Activated CD4-positive, alpha-beta T cell treated with anti-CD3 and anti-CD28 coated beads, Interleukin-2, amount 10 ng/mL, durations not matched to agents 7 days and 5 days (primary cell): ENCODE measurements at regions of chr17 and their contacts with region 1.

Region 1: DNA sequence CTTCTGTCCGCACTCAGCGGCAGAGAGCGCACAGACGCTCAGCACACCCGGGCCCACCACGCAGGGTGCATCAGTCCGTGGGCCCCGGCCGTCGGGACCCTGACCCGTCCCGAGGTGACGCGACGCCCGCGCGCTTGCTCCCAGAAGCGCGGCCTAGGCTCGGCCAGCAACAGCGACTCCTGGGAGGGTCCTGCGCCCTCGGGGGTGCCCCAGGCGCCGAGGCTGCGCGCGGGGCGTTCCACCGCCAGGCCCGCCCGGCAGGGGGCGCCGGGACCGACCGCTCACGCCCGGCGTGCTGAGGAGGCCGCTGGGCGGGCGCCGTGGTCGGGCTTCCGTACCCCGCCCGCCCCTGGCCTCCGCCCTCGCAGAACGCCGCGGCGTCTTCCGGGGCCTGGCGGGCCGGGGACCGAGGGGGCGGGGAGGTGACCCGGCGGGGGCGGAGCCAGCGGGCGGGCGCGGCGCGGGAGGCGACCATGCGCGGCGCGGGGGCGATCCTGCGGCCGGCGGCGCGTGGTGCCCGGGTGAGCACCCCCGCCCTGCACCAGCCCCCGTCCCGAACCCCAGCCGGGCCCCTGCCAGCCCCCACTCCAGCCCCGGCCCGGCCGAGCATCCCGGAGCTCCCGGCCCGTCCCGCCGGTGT is at the start of gene CISD3:
- DNase-seq: peak; percentile 85
- H3K4me3 Mint-ChIP-seq: peak within 1 kb of the TSS; percentile 97
- H3K27ac Mint-ChIP-seq: peak within 1 kb of the TSS; percentile 91
- H3K4me1 Mint-ChIP-seq: peaks cover 77% of the 10 kb centered on the region
- H3K27me3 Mint-ChIP-seq: no peaks in the 10 kb centered on the region
- total RNA-seq, gene CISD3: 45.7 to 46.3 TPM

Region 2: DNA sequence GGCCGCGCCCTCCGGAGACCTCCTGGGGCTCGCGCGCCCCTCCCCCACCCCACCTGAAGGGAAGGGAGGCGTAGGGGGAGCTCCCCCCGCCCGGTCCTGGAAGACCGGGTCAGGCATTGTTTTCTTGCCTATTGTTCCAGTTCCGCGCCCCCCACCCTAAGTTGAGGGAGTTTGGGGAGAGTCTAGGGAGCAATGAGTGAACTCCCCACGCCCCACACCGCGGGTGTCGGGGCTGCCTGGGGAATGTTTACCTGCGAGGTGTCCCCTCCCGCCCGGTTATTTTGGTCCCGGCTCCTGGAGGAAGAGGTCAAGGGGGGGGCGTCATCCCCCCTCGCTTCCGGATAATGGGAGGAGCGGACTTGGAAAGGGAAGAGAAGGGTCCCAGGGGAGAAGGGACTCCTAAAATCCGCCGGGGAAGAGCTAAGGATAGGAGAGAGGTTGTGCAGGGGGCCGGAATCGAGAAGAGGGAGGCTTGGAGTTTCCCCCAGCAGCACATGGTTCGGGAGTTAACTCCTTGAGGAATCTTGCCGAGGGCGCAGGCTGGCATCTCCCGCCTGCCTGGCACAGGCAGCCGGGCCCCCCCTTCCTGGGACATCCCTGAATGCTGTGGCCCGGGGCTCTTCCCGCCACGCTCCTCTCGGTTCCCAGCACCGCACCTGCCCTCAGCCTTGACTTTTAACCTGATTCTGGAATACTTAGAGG is 24.1 kb before region 1 on chr17:
- CTCF ChIA-PET with region 1: interaction called, 10 read pairs
- POLR2A ChIA-PET with region 1: interaction called, 7 read pairs
- DNase-seq: peak; percentile 17
- H3K4me3 Mint-ChIP-seq: peak overlapping the region; percentile 93
- H3K27ac Mint-ChIP-seq: peak overlapping the region; percentile 86
- H3K4me1 Mint-ChIP-seq: peaks cover 54% of the 10 kb centered on the region
- H3K27me3 Mint-ChIP-seq: no peaks in the 10 kb centered on the region

Region 3: DNA sequence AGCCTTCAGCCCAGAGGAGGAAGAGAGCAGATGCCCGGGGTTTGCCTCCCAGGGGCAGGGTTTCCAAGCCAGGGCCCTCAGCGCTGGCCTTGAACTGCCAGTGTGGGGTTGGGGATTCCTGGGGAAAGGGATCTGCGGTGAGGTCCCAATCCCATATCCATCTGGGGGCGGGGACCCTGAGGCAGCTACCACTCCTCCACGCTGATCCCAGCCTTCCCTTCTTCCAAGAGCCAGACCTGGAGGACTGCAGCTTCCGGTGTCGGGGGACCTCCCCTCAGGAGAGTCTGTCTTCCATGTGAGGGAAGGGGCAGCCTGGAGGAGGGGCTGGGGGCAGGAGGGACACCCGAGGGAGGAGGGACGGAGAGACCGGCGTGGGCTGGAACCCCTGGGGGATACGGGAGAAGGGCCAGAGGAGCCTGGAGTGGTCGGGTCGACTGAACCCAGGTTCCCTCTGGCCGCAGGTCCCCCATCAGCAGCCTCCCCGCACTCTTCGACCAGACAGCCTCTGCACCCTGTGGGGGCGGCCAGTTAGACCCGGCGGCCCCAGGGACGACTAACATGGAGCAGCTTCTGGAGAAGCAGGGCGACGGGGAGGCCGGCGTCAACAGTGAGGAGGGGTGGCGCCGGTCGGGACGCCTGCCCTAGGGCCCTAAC is 10.6 kb before region 1 on chr17:
- CTCF ChIA-PET with region 1: interaction called, 7 read pairs
- POLR2A ChIA-PET with region 1: interaction called, 10 read pairs
- DNase-seq: no peak
- H3K4me3 Mint-ChIP-seq: no peak overlapping the region
- H3K27ac Mint-ChIP-seq: peak overlapping the region; percentile 31
- H3K4me1 Mint-ChIP-seq: peaks cover 28% of the 10 kb centered on the region
- H3K27me3 Mint-ChIP-seq: no peaks in the 10 kb centered on the region

Region 4: DNA sequence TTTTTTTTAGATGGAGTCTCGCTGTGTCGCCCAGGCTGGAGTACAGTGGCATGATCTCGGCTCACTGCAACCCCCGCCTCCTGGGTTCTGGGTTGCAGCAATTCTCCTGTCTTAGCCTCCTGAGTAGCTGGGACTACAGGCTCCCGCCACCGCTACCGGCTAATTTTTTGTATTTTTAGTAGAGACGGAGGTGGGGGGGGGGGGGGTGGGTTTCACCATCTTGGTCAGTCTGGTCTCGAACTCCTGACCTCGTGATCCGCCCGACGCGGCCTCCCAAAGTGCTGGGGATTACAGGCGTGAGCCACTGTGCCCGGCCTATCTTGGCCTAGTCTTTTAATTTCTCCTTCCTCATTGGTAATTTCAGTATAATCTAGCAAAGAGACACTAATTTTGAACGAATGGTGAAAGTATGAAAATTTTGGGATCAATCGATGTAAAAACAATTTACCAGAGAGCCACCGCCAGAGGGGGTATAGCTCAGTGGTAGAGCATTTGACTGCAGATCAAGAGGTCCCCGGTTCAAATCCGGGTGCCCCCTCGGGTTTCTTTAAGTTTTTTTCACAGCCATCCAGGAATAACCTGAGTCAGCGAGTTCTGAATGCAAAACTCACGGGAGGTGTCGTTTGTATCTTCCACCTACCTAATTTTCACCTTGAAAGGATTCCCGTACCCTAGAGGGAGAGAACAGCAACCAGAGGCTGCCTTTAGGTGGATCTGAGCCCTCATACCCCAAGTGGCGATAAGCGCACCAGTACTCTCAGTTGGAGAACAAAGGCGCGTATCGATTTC is 137.4 kb after region 1 on chr17:
- CTCF ChIA-PET with region 1: no interaction called
- POLR2A ChIA-PET with region 1: no interaction called
- DNase-seq: peak; percentile 79
- H3K4me3 Mint-ChIP-seq: peak overlapping the region; percentile 90
- H3K27ac Mint-ChIP-seq: peak overlapping the region; percentile 96
- H3K4me1 Mint-ChIP-seq: peaks cover 32% of the 10 kb centered on the region
- H3K27me3 Mint-ChIP-seq: no peaks in the 10 kb centered on the region